ENCODE measurements at regions of chr14 and their contacts with region 1.

Region 1: DNA sequence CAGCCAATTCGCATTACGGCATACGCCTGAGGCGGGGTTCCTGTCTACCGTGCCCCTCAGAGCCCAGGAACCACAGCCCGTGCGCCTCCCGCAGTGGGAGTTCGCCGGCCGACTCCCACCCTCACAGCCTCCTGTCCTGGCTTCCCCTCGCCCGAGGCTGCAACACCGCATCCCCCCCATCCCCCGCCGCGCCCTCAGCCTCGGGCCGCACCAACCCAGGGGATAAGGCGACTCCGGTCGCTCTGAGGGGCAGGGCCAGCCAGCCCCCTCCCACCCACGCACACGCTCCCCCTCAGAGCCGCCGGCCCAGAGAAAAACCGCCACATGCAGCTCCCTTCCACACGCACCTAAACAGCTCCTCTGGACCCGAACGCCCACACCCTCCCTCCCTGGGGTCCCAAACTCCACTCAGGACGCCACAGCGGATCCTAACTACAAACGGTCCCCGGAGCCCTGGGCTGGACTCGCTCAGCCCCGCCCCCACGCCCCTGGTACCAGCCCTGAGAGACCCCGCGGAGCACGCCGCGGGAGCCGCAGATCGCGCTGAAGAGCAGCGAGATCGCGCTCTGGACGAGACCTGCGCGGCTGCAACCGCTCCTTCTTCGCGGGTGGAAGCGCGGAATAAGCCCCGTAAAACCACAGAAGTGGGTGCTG is at the start of gene C14orf39:
- DNase-seq: no peak
- H3K4me3 ChIP-seq: peak within 1 kb of the TSS in 2 of 3 experiments; percentile 9 to 10
- H3K27ac ChIP-seq: no peak within 1 kb of the TSS
- H3K4me1 ChIP-seq: peaks cover 3% of the 10 kb centered on the region
- H3K27me3 ChIP-seq: peaks cover 31% of the 10 kb centered on the region
- CTCF ChIP-seq: no peak
- total RNA-seq, gene C14orf39: not detected

Region 2: GRCh38 chr14:60266021-60266937 is 219.4 kb before region 1 on chr14:
- CTCF ChIA-PET with region 1: no interaction called
- dilution Hi-C with region 1: no loop called
- in situ Hi-C with region 1: no loop called
- intact Hi-C with region 1: loop called (anchors 5 kb)
- DNase-seq: peak; percentile 25
- H3K4me3 ChIP-seq: no peak overlapping the region
- H3K27ac ChIP-seq: no peak overlapping the region
- H3K4me1 ChIP-seq: no peaks in the 10 kb centered on the region
- H3K27me3 ChIP-seq: no peaks in the 10 kb centered on the region
- CTCF ChIP-seq: peak; percentile 68 to 71

Region 3: DNA sequence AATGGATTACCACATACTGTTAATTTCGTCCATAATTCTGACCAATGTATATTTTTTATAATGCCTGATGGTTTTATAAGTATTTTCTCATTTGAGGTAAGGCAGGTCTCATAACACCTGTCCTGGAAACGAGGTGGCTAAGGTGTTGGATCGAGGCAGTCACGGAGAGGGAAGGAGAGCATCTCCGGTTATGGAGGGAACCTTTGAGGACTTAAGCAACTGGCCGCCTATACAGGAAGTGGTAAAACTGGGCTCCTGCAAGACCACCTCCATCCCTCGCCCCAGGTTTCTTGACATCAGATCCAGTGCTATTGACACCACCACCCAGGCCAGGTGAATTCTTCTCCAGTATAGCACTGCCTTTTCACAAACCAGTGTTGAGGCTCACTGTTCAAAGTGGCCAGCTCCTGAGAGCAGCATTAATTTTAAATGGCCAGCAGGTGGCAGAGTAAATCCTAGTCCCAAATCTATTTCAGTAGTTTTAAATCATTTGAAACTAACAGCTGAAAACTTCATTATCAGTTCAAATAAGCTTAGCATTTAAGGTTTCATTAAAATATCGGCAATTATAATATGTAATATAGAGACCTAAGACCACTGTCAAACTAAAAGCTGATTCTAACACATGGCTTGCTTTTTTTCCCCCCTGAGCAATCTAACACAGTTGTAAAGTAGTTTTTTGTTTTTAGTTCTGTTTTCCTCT is 135.9 kb before region 1 on chr14:
- CTCF ChIA-PET with region 1: no interaction called
- dilution Hi-C with region 1: no loop called
- in situ Hi-C with region 1: loop called in 1 of 2 experiments (anchors 10 kb)
- intact Hi-C with region 1: loop called (anchors 1 kb)
- DNase-seq: peak; percentile 25
- H3K4me3 ChIP-seq: no peak overlapping the region
- H3K27ac ChIP-seq: no peak overlapping the region
- H3K4me1 ChIP-seq: no peaks in the 10 kb centered on the region
- H3K27me3 ChIP-seq: no peaks in the 10 kb centered on the region
- CTCF ChIP-seq: peak; percentile 58 to 64

Region 4: DNA sequence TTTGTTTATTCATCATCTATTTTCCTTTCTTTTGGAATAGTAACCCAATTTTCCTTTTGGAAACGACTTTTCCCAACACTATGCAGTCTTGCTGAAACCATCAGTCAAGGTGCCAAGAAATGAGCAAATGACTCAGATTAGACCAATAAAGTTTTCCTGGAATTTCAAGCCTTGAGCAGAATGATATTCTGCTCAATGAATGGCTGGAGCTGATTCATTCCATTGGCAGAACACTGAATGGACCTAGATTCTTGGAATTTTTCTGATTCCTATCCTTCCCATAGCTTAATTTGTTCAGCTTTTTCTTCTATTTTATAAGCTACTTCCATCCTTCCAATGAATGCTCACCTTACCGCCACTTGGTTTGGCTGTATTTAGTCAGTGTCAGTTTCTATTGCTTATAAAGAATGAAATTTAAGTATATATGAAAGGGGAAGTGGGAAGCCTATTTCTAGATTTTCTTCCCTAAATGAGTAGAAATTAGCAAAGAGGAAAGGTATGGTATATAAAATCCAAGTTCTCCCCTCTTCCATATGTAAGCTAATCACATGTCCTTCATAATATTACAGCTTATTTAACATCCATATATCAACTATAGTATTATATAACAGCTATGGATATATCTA is 88.9 kb before region 1 on chr14:
- CTCF ChIA-PET with region 1: no interaction called
- dilution Hi-C with region 1: no loop called
- in situ Hi-C with region 1: no loop called
- intact Hi-C with region 1: no loop called
- DNase-seq: no peak
- H3K4me3 ChIP-seq: no peak overlapping the region
- H3K27ac ChIP-seq: no peak overlapping the region
- H3K4me1 ChIP-seq: no peaks in the 10 kb centered on the region
- H3K27me3 ChIP-seq: no peaks in the 10 kb centered on the region
- CTCF ChIP-seq: no peak

Region 5: GRCh38 chr14:60789656-60790055 is 303.9 kb after region 1 on chr14:
- CTCF ChIA-PET with region 1: no interaction called
- dilution Hi-C with region 1: no loop called
- in situ Hi-C with region 1: no loop called
- intact Hi-C with region 1: no loop called
- DNase-seq: no peak
- H3K4me3 ChIP-seq: no peak overlapping the region
- H3K27ac ChIP-seq: no peak overlapping the region
- H3K4me1 ChIP-seq: no peaks in the 10 kb centered on the region
- H3K27me3 ChIP-seq: no peaks in the 10 kb centered on the region
- CTCF ChIP-seq: no peak

Region 6: DNA sequence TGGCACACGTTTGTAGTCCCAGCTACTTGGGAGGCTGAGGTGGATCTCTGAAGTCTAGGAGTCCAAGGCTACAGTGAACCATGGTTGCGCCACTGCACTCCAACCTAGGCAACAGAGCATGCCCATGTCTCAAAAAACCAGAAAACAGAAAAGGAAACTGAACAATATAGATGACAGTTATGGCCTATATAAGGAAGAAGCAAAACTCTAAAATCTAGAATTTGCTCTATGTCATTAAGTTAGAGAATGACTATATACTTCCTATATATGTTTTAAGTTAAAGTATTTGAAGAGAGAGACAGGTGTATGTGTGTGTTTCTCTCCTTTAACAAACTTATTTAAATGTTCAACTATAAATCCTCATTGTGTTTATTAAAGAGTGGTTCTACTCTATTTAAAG is 314.7 kb after region 1 on chr14:
- CTCF ChIA-PET with region 1: no interaction called
- dilution Hi-C with region 1: no loop called
- in situ Hi-C with region 1: no loop called
- intact Hi-C with region 1: no loop called
- DNase-seq: no peak
- H3K4me3 ChIP-seq: no peak overlapping the region
- H3K27ac ChIP-seq: no peak overlapping the region
- H3K4me1 ChIP-seq: no peaks in the 10 kb centered on the region
- H3K27me3 ChIP-seq: no peaks in the 10 kb centered on the region
- CTCF ChIP-seq: no peak

Measured in mammary epithelial cell (primary cell).